PC-9 (cell line): ENCODE measurements at regions of chr16 and their contacts with region 1.

Region 1: GRCh38 chr16:21300309-21301167 is 22.4 kb upstream of the CRYM start:
- DNase-seq: peak; percentile 98 to 100
- H3K4me3 ChIP-seq: peak overlapping the region; percentile 88
- H3K27ac ChIP-seq: peak overlapping the region; percentile 85
- H3K4me1 ChIP-seq: peaks cover 27% of the 10 kb centered on the region
- H3K27me3 ChIP-seq: no peaks in the 10 kb centered on the region
- CTCF ChIP-seq: peak; percentile 80

Region 2: DNA sequence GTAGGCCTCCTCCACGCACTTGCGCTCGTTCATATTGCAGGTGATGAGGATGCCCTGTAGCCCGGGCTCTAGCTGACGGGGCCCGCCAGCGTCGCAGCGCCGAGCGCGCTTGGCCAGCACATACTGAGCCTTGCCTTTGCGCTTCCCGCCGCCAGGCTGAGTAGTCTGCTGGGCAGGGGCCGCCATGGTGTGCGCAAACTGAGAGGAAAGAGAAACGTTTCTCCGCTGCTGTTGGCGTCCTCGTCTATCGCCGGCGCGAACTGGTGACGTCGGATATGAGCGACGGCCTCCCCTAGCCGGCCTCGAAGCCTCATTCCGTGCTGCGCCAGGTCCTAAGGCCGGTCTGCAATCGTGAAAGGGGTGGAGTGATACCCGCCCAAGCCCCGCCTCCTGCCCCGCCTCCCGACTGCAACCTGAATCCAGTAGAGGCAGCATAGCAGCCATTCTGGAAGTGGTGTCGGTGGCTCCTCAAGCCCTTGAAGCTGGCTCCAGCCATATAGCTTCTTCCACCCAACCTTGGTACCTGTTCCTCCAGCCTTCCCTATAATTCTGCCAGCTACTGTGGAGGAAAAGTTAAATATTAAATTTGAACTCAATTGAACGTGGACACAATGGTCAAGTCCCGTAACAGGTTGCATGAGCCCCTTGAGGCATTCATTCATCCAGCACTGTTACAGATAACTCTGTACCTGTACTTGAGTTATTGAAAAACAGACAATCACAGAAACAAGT is 558.8 kb before region 1 on chr16 and contains the start of gene THUMPD1:
- CTCF ChIA-PET with region 1: no interaction called
- POLR2A ChIA-PET with region 1: no interaction called
- intact Hi-C with region 1: loop called (anchors 2 kb)
- DNase-seq: peak; percentile 86 to 94
- H3K4me3 ChIP-seq: peak within 1 kb of the TSS; percentile 89
- H3K27ac ChIP-seq: peak within 1 kb of the TSS; percentile 70
- H3K4me1 ChIP-seq: peaks cover 17% of the 10 kb centered on the region; the same call in 1 of the 2 replicates
- H3K27me3 ChIP-seq: no peaks in the 10 kb centered on the region
- CTCF ChIP-seq: no peak
- total RNA-seq, gene THUMPD1: 35.0 and 36.0 TPM in 2 replicates

Region 3: GRCh38 chr16:20806168-20807050 is 494.1 kb before region 1 on chr16 and contains the starts of genes ERI2 and REXO5:
- CTCF ChIA-PET with region 1: interaction called, 4 read pairs
- POLR2A ChIA-PET with region 1: interaction called, 6 read pairs
- intact Hi-C with region 1: loop called (anchors 2 kb)
- DNase-seq: peak; percentile 89 to 96
- H3K4me3 ChIP-seq: peak within 1 kb of the TSS; percentile 77
- H3K27ac ChIP-seq: peak within 1 kb of the TSS; percentile 47
- H3K4me1 ChIP-seq: peaks cover 10% of the 10 kb centered on the region; the same call in 1 of the 2 replicates
- H3K27me3 ChIP-seq: no peaks in the 10 kb centered on the region
- CTCF ChIP-seq: peak; percentile 53
- total RNA-seq, gene ERI2: 25.6 and 29.5 TPM in 2 replicates
- total RNA-seq, gene REXO5: 9.5 and 13.2 TPM in 2 replicates

Region 4: DNA sequence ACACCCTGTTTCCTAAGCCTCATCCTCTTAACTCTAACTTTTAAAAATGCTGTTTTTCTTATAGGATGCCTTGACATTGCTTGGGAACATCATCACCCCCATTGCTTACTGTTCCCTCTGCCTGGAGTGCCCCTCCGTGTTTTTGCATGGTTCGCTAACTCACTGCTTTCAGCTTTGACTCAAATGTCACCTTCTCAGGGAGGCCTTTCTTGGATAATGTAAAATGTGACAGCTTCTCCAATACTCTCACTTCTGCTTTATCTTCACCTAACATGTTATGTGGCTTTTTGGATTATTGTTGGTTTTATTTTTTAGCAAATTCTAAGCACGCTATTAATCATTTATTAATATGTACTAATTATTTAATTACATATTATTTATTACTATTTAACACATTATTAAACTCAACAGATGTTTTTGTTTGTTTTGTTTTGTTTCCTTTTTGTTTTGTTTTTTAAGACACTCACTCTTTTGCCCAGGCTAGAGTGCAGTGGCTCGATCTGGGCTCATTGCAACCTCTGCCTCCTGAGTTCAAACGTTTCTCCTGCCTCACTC is 26.3 kb before region 1 on chr16:
- CTCF ChIA-PET with region 1: no interaction called
- POLR2A ChIA-PET with region 1: no interaction called
- intact Hi-C with region 1: no loop called
- DNase-seq: no peak
- H3K4me3 ChIP-seq: no peak overlapping the region
- H3K27ac ChIP-seq: no peak overlapping the region
- H3K4me1 ChIP-seq: no peaks in the 10 kb centered on the region
- H3K27me3 ChIP-seq: peaks cover 54% of the 10 kb centered on the region
- CTCF ChIP-seq: no peak

Region 5: GRCh38 chr16:21565861-21566669 is 265.5 kb after region 1 on chr16:
- CTCF ChIA-PET with region 1: no interaction called
- POLR2A ChIA-PET with region 1: no interaction called
- intact Hi-C with region 1: loop called (anchors 10 kb)
- DNase-seq: no peak
- H3K4me3 ChIP-seq: no peak overlapping the region
- H3K27ac ChIP-seq: no peak overlapping the region
- H3K4me1 ChIP-seq: peaks cover 8% of the 10 kb centered on the region; the same call in 1 of the 2 replicates
- H3K27me3 ChIP-seq: no peaks in the 10 kb centered on the region
- CTCF ChIP-seq: no peak

Region 6: GRCh38 chr16:22321339-22322001 is 1020.9 kb after region 1 on chr16:
- CTCF ChIA-PET with region 1: interaction called, 7 read pairs
- POLR2A ChIA-PET with region 1: no interaction called
- intact Hi-C with region 1: loop called (anchors 5 kb)
- DNase-seq: peak; percentile 54 to 59
- H3K4me3 ChIP-seq: no peak overlapping the region
- H3K27ac ChIP-seq: no peak overlapping the region
- H3K4me1 ChIP-seq: no peaks in the 10 kb centered on the region
- H3K27me3 ChIP-seq: no peaks in the 10 kb centered on the region
- CTCF ChIP-seq: peak; percentile 94